Naive thymus-derived CD8-positive, alpha-beta T cell (primary cell): ENCODE measurements at regions of chr2 and their contacts with region 1.

Region 1: DNA sequence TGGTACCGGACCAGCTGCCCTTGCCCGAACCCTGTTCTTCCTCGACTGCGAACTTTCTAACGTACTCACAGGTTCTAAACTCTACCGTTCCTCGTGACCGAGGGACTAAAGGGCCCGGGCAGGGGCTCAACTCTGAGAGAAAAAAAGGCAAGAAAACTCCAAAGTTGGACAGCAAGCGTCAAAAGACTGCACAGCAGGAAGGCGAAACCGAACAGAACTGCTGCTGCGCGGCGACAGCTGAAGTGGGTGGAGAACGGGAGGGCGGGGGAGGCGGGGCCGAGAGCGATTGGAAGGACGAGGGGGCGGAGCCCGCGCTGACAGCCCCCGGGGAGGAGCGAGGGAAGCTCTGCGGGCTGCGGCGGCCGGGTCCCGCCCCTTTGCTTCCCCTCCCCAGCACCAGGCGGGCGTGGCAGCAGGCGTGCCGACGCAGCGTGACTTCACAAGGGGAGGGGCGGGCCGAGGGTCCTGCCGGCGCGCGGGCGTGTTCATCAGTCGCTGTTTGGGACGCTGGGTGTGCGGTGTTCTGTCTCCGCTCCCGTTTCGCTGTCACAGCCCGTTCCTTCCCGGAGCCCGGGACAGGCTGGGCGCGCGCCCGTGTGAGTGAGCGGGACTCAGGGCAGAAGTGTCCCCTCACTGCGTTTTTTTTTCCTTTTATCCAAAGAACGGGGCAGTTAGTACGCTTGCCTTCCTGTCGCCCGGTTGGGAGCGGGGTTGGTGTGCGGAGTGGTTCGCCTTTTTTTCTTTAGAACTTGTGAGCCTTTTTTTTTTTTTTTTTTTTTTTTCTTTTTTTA is at the start of gene NABP1:
- DNase-seq: peak; percentile 98 to 99 (median 98)
- ATAC-seq: peak; percentile 82 to 88
- H3K4me3 Mint-ChIP-seq: peak within 1 kb of the TSS; percentile 93 to 99 (median 96)
- H3K27ac Mint-ChIP-seq: peak within 1 kb of the TSS; percentile 96 to 100 (median 98)
- H3K4me1 Mint-ChIP-seq: peaks cover 21 to 74% (median 56%) of the 10 kb centered on the region in 4 donors
- H3K27me3 Mint-ChIP-seq: peaks cover 0 to 2% (median 0%) of the 10 kb centered on the region in 5 donors
- polyA plus RNA-seq, gene NABP1: 3.5 to 4.7 (median 4.0) TPM

Region 2: GRCh38 chr2:191617575-191617974 is 60.3 kb before region 1 on chr2:
- POLR2A ChIA-PET with region 1: interaction called, 94 read pairs
- DNase-seq: peak; percentile 6 to 86 (median 62)
- ATAC-seq: peak; percentile 97 to 98
- H3K4me3 Mint-ChIP-seq: peak overlapping the region; percentile 2 to 76 (median 52)
- H3K27ac Mint-ChIP-seq: peak overlapping the region; percentile 60 to 96 (median 89)
- H3K4me1 Mint-ChIP-seq: peaks cover 23 to 52% (median 39%) of the 10 kb centered on the region in 4 donors
- H3K27me3 Mint-ChIP-seq: no peaks in the 10 kb centered on the region

Region 3: DNA sequence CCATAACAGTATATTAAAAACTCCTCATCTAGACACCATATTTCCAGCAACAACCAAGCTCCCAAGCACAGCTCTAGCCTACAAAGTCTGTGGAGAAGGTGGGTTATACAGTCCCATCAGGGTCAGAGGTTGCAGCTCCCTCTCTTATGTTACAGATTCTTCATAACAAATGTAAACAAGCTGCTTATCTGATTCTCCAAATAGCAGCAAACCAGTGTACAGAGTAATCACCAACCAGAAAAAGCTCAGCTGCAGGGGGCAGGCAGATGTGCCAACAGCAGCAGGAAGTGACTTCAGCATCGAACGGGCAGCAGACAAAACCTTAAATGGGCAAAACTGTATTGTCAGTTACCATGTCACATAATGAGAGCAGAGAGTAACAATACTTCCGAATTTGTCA is 52.8 kb before region 1 on chr2:
- POLR2A ChIA-PET with region 1: interaction called, 94 read pairs
- DNase-seq: peak in 7 of 10 donors; percentile 12 to 63 (median 29)
- ATAC-seq: peak; percentile 79 to 92
- H3K4me3 Mint-ChIP-seq: peak overlapping the region in 2 of 10 donors; percentile 6 to 12
- H3K27ac Mint-ChIP-seq: peak overlapping the region in 9 of 10 donors; percentile 3 to 74 (median 31)
- H3K4me1 Mint-ChIP-seq: peaks cover 19 to 57% (median 33%) of the 10 kb centered on the region in 4 donors
- H3K27me3 Mint-ChIP-seq: no peaks in the 10 kb centered on the region

Region 4: GRCh38 chr2:191688934-191689695 is 11.3 kb after region 1 on chr2:
- POLR2A ChIA-PET with region 1: interaction called, 12 read pairs
- DNase-seq: no peak
- ATAC-seq: no peak
- H3K4me3 Mint-ChIP-seq: no peak overlapping the region
- H3K27ac Mint-ChIP-seq: peak overlapping the region in 6 of 10 donors; percentile 15 to 73 (median 28)
- H3K4me1 Mint-ChIP-seq: peaks cover 5 to 20% (median 9%) of the 10 kb centered on the region in 4 donors
- H3K27me3 Mint-ChIP-seq: no peaks in the 10 kb centered on the region